ENCODE measurements at regions of chr2 and their contacts with region 1.

Region 1: DNA sequence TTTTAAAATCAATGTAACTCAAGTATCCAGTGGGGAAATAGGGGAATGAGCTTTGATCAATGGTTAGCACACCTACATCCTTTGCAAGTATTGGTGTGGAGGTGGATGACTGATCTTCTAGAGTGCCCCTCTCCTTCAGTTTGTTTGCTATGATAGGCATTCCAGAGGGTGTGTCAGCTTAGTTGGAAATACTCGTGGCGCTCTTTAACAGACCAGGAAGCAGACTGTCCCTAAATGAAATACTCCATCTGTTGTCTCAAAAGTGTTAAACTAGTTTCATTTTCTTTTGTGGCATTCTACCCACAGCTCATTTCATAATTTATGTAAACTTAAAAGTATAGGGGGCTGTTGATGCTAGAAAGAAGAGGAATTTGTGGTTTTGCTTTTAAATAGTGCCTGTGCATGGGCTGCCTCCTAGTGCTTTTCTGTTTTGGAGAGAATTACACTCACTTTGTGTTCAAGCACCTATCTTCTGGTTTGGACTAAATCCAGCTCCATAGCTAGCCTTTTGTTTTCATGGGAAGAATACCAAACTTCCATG is 66.2 kb downstream of the STAT1 start:
- DNase-seq: no peak
- H3K4me3 ChIP-seq: no peak overlapping the region
- CTCF ChIP-seq: no peak

Region 2: GRCh38 chr2:190781604-190782198 is 166.1 kb before region 1 on chr2:
- CTCF ChIA-PET with region 1: interaction called, 10 read pairs
- POLR2A ChIA-PET with region 1: no interaction called
- DNase-seq: peak; percentile 12
- H3K4me3 ChIP-seq: no peak overlapping the region
- CTCF ChIP-seq: peak; percentile 46